ENCODE measurements at regions of chr14 and their contacts with region 1.

Region 1: DNA sequence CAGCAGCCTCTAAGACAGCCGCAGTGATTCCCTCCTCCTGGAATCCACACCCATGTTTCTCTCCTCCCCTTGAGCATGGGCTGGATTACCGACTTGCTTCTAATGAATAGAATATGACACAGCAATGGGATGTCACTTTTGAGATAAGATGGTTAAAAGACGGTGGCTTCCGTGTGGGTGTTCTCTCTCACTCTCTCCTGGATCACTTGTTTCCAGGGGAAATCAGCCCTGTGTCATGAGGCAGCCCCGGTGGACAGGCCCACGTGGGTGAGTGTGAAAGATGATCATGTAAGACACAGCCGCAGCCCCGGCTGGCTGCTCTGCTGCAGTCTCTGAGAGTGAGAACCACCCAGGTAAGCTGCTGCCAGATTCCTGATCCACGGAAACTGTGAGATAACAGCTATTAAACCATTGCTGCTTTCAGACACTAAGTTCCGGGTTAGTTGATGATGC is 10.7 kb downstream of the MOAP1 start:
- DNase-seq: no peak
- ATAC-seq: no peak
- H3K4me3 ChIP-seq: no peak overlapping the region
- H3K4me3 Mint-ChIP-seq: no peak overlapping the region
- H3K27ac ChIP-seq: no peak overlapping the region
- H3K27ac Mint-ChIP-seq: no peak overlapping the region
- H3K4me1 ChIP-seq: no peaks in the 10 kb centered on the region
- H3K4me1 Mint-ChIP-seq: no peaks in the 10 kb centered on the region
- H3K27me3 ChIP-seq: no peaks in the 10 kb centered on the region
- H3K27me3 Mint-ChIP-seq: no peaks in the 10 kb centered on the region
- CTCF ChIP-seq: no peak

Region 2: DNA sequence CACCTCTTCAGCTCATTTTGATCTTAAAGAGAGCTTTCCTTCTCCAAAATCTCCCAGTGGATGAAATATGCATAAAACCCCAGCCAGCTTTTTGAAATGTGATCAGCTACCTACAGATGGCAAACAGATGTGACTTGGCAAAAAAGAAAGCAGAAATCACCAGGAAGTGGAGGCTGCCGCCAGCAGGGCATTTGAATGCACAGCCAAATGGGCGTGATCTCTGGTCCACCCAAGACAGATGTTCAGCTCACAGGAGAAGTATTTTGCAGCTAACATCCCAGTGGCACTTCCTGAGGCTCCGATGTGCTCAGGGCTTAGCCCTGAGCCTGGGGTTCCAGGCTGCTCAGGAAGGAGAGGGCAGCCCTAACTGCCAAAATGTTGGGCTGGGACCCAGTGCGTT is 503.8 kb before region 1 on chr14:
- CTCF ChIA-PET with region 1: no interaction called
- POLR2A ChIA-PET with region 1: no interaction called
- intact Hi-C with region 1: no loop called
- DNase-seq: peak; percentile 50
- ATAC-seq: no peak
- H3K4me3 ChIP-seq: no peak overlapping the region
- H3K4me3 Mint-ChIP-seq: peak overlapping the region; percentile 33
- H3K27ac ChIP-seq: peak overlapping the region in 1 of 2 donors; percentile 29
- H3K27ac Mint-ChIP-seq: peak overlapping the region; percentile 75
- H3K4me1 ChIP-seq: peaks cover 53 to 74% of the 10 kb centered on the region in 2 donors
- H3K4me1 Mint-ChIP-seq: peaks cover 81% of the 10 kb centered on the region
- H3K27me3 ChIP-seq: no peaks in the 10 kb centered on the region
- H3K27me3 Mint-ChIP-seq: no peaks in the 10 kb centered on the region
- CTCF ChIP-seq: no peak

Region 3: GRCh38 chr14:93081876-93082570 is 91.9 kb before region 1 on chr14:
- CTCF ChIA-PET with region 1: no interaction called
- POLR2A ChIA-PET with region 1: no interaction called
- intact Hi-C with region 1: no loop called
- DNase-seq: no peak
- ATAC-seq: no peak
- H3K4me3 ChIP-seq: no peak overlapping the region
- H3K4me3 Mint-ChIP-seq: no peak overlapping the region
- H3K27ac ChIP-seq: peak overlapping the region; percentile 35 to 49
- H3K27ac Mint-ChIP-seq: peak overlapping the region; percentile 16
- H3K4me1 ChIP-seq: peaks cover 9 to 26% of the 10 kb centered on the region in 2 donors
- H3K4me1 Mint-ChIP-seq: peaks cover 40% of the 10 kb centered on the region
- H3K27me3 ChIP-seq: no peaks in the 10 kb centered on the region
- H3K27me3 Mint-ChIP-seq: no peaks in the 10 kb centered on the region
- CTCF ChIP-seq: no peak

Region 4: DNA sequence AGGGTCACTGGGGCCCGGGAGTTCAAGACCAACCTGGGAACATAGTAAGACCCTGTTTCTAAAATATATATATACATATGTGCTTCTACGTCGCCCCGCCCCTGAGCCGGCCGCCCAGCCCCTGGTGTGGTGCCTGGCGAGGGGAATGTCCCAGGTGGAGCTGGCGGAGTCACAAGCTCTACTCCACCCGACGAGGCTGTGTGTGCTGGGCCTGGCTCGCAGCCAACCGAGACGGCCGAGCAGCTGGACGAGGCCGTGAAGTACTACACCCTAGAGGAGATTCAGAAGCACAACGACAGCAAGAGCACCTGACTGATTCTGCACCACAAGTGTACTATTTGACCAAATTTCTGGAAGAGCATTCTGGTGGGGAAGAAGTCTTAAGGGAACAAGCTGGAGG is 36.1 kb before region 1 on chr14:
- CTCF ChIA-PET with region 1: interaction called, 3 read pairs
- POLR2A ChIA-PET with region 1: no interaction called
- intact Hi-C with region 1: loop called (anchors 1 kb)
- DNase-seq: no peak
- ATAC-seq: no peak
- H3K4me3 ChIP-seq: no peak overlapping the region
- H3K4me3 Mint-ChIP-seq: no peak overlapping the region
- H3K27ac ChIP-seq: no peak overlapping the region
- H3K27ac Mint-ChIP-seq: no peak overlapping the region
- H3K4me1 ChIP-seq: no peaks in the 10 kb centered on the region
- H3K4me1 Mint-ChIP-seq: peaks cover 2% of the 10 kb centered on the region
- H3K27me3 ChIP-seq: no peaks in the 10 kb centered on the region
- H3K27me3 Mint-ChIP-seq: no peaks in the 10 kb centered on the region
- CTCF ChIP-seq: no peak

Measured in B cell (primary cell).